WTC11 (cell line): ENCODE measurements at regions of chr20 and their contacts with region 1.

Region 1: GRCh38 chr20:1212607-1213396 is 9.5 kb downstream of the C20orf202 start:
- DNase-seq: peak; percentile 80
- ATAC-seq: peak; percentile 96
- H3K4me3 Mint-ChIP-seq: no peak overlapping the region
- H3K27ac Mint-ChIP-seq: no peak overlapping the region
- H3K4me1 Mint-ChIP-seq: peaks cover 30% of the 10 kb centered on the region
- H3K27me3 Mint-ChIP-seq: peaks cover 32% of the 10 kb centered on the region
- CTCF ChIP-seq: peak; percentile 73

Region 2: DNA sequence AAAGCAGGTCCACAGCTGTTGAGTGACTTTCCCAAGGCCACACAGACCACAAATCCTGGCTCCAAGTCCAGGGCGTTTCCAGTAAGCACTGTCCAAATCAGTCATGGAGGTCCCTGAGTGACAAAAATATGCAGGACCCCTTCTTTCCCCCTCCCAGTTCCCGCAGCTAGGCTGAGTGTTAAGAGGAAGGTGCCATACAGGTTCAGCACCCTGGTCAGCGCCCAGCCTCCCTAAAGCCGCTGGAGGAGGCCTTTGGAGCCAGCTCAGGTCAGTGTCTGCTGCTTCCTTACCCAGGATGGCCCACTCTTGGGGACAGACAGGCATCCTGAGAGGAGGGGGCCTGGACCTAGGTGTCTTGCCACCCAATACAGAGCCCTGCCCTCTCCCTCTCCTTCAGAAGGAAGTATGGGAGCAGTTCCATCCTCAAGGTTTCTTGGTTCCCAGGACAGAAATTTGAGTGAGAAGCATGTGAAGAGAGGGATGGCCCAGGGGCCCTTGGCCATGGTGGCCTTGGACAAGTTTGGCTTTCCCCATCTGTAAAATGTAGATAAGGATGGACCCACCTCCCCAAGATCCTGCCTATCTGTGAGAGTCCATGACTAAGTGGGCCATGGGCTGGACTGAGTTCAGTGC is 41.2 kb before region 1 on chr20:
- CTCF ChIA-PET with region 1: interaction called, 11 read pairs
- POLR2A ChIA-PET with region 1: no interaction called
- DNase-seq: peak; percentile 80
- ATAC-seq: peak; percentile 74
- H3K4me3 Mint-ChIP-seq: no peak overlapping the region
- H3K27ac Mint-ChIP-seq: no peak overlapping the region
- H3K4me1 Mint-ChIP-seq: no peaks in the 10 kb centered on the region
- H3K27me3 Mint-ChIP-seq: no peaks in the 10 kb centered on the region
- CTCF ChIP-seq: no peak